Activated T-helper 1 cell treated with anti-CD3 and anti-CD28 coated beads, Interleukin-12 subunit alpha, Interleukin-12 subunit beta, Interleukin-2, Interleukin-4 antibody, amounts not matched to agents 30 ng/mL and 10 ng/mL and 1 ng/mL, durations not matched to agents 14 hours and 24 hours and 36 hours (primary cell): ENCODE measurements at regions of chr7 and their contacts with region 1.

Region 1: GRCh38 chr7:5704534-5704922 is 76.9 kb downstream of the RNF216 start:
- DNase-seq: peak; percentile 65
- H3K4me3 Mint-ChIP-seq: no peak overlapping the region
- H3K27ac Mint-ChIP-seq: no peak overlapping the region
- H3K4me1 Mint-ChIP-seq: peaks cover 66% of the 10 kb centered on the region
- H3K27me3 Mint-ChIP-seq: no peaks in the 10 kb centered on the region

Region 2: GRCh38 chr7:5396999-5397663 is 307.4 kb before region 1 on chr7:
- intact Hi-C with region 1: loop called (anchors 1 kb)
- DNase-seq: peak; percentile 81
- H3K4me3 Mint-ChIP-seq: peak overlapping the region; percentile 82
- H3K27ac Mint-ChIP-seq: peak overlapping the region; percentile 91
- H3K4me1 Mint-ChIP-seq: peaks cover 29% of the 10 kb centered on the region
- H3K27me3 Mint-ChIP-seq: no peaks in the 10 kb centered on the region

Region 3: GRCh38 chr7:5494683-5495561 is 209.6 kb before region 1 on chr7:
- intact Hi-C with region 1: loop called (anchors 1 kb)
- DNase-seq: peak; percentile 73
- H3K4me3 Mint-ChIP-seq: no peak overlapping the region
- H3K27ac Mint-ChIP-seq: no peak overlapping the region
- H3K4me1 Mint-ChIP-seq: peaks cover 12% of the 10 kb centered on the region
- H3K27me3 Mint-ChIP-seq: no peaks in the 10 kb centered on the region

Region 4: DNA sequence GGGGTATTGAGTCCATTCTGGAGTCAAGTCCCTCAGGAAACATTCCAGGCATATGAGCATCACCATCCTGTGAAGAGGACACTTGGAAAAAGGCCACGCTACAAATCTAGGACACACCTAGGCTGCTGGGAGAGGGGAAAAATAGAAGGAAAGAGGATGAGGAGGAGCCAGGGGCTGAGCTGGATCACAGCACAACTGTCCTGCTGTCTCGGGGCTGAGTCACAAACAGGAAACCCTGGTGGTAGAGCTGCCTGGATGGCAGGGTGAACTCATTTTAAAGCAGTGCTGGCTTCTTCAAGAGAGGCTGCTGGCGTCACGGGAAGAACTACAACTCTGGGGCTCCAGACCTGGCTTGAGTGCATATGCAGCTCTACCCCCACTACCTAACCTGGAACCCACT is 74.6 kb before region 1 on chr7:
- intact Hi-C with region 1: no loop called
- DNase-seq: peak; percentile 32
- H3K4me3 Mint-ChIP-seq: no peak overlapping the region
- H3K27ac Mint-ChIP-seq: peak overlapping the region; percentile 71
- H3K4me1 Mint-ChIP-seq: peaks cover 28% of the 10 kb centered on the region
- H3K27me3 Mint-ChIP-seq: peaks cover 3% of the 10 kb centered on the region

Region 5: GRCh38 chr7:5665094-5666025 is 39.2 kb before region 1 on chr7:
- intact Hi-C with region 1: loop called (anchors 1 kb)
- DNase-seq: peak; percentile 59
- H3K4me3 Mint-ChIP-seq: no peak overlapping the region
- H3K27ac Mint-ChIP-seq: no peak overlapping the region
- H3K4me1 Mint-ChIP-seq: peaks cover 23% of the 10 kb centered on the region
- H3K27me3 Mint-ChIP-seq: no peaks in the 10 kb centered on the region

Region 6: GRCh38 chr7:5689118-5689517 is 15.4 kb before region 1 on chr7:
- intact Hi-C with region 1: loop called (anchors 1 kb)
- DNase-seq: peak; percentile 50
- H3K4me3 Mint-ChIP-seq: peak overlapping the region; percentile 47
- H3K27ac Mint-ChIP-seq: peak overlapping the region; percentile 83
- H3K4me1 Mint-ChIP-seq: peaks cover 79% of the 10 kb centered on the region
- H3K27me3 Mint-ChIP-seq: peaks cover 25% of the 10 kb centered on the region

Region 7: DNA sequence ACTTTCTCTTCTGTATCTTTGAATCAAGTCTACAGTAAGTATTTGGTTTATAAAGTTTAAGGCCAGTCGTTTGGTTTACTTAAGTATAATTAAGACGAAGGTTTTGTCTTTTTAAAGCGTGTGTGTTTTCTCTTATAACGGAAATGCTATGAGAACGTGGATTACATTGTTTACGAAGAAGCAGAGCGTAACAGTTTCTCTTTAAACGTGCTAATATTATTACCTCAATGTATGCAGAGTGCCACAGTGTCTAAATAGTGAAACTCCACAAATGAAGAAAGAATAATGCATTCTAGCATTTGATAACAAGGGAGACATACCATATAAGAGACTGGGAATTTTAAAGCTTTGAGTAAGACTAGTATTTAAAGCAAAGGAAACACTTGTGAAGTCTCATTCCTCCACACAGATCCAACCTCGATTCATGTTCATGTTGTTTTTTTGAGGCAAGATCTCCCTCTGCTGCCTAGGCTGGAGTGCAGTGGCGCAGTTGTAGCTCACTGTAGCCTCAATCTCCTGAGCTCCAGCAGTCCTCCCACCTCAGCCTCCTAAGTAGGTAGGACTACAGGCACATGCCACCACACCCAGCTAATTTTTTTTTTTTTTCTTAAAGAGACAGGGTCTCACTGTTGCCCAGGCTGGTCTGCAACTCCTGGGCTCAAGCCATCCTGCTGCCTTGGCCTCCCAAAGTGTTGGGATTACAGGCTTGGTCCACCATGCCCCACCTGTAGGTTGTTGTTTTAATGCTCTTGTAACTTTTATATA is 401.8 kb after region 1 on chr7:
- intact Hi-C with region 1: loop called (anchors 1 kb)
- DNase-seq: peak; percentile 28
- H3K4me3 Mint-ChIP-seq: peak overlapping the region; percentile 86
- H3K27ac Mint-ChIP-seq: peak overlapping the region; percentile 80
- H3K4me1 Mint-ChIP-seq: peaks cover 20% of the 10 kb centered on the region
- H3K27me3 Mint-ChIP-seq: no peaks in the 10 kb centered on the region